ENCODE measurements at regions of chr1 and their contacts with region 1.

Region 1: DNA sequence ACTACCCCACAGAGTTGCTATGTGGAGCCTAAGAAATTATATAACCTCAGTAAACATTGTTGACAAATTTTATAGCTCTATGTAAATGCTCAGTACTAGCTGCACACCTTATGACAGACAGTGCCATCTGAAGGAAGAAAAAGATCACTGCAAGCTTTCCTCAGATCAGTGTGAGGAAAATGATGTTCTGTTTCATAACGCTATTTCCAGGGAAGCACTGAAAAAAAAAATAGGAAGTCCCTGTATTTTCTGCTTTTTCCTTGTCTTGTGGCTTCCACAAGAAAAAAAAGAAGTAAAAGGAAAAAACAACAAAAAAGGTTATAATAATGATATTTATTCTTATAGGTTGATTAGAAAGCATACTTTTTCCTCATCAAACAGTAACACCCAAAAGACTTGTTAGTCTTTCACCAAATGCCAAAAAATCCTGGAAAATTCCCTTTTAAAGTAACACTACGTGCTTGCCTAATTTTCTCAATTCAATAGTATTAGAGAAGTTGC is 23.2 kb downstream of the LYST start:
- DNase-seq: peak; percentile 76
- H3K4me3 Mint-ChIP-seq: no peak overlapping the region
- H3K27ac Mint-ChIP-seq: no peak overlapping the region
- H3K4me1 Mint-ChIP-seq: no peaks in the 10 kb centered on the region
- H3K27me3 Mint-ChIP-seq: no peaks in the 10 kb centered on the region
- CTCF ChIP-seq: peak; percentile 76

Region 2: DNA sequence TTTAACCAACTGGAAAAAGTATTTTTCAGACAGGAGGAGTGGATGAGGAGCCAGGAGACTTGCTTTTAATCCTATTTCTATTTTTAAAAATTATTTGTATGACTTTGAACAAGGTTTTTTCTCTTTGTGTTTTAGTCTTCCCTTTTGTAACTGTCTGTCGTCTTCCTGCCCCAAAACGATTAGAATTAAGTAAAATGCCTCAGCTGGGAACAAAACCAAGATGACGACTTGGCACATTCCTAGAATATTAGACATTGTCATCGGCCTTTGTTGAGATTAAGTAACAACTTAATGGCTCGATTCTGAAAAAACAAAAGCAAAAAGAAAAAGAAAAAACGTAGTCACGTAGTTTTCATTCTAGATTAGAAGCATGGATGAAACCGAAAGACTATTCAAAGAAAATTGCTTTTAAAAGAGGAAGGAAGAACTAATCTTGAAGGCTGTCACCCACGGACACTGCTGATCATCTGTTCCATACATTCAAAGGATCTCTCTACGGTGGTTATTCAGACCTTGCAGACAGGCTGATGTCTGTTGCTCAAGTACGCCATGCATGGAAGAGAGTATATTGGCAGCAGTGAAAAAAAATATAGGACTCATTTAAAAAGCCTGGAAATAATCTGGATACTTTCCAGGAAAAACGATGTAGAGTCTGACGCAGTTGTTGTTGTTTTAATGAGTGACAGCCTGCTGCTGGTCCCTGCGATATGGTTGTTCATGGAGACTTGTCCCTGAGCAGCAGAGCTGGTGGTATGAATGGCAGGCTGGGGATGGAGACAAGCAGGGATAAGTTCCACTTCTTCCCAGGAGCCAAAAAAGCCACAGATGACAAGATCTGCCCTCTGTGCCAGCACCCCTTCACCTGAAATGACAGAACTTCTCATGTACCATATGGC is 210.8 kb before region 1 on chr1:
- CTCF ChIA-PET with region 1: no interaction called
- POLR2A ChIA-PET with region 1: no interaction called
- intact Hi-C with region 1: no loop called
- DNase-seq: peak; percentile 71
- H3K4me3 Mint-ChIP-seq: peak overlapping the region; percentile 69
- H3K27ac Mint-ChIP-seq: peak overlapping the region; percentile 72
- H3K4me1 Mint-ChIP-seq: peaks cover 13% of the 10 kb centered on the region
- H3K27me3 Mint-ChIP-seq: no peaks in the 10 kb centered on the region
- CTCF ChIP-seq: no peak

Region 3: GRCh38 chr1:235791532-235792060 is 51.9 kb before region 1 on chr1:
- CTCF ChIA-PET with region 1: interaction called, 14 read pairs
- POLR2A ChIA-PET with region 1: interaction called, 6 read pairs
- intact Hi-C with region 1: no loop called
- DNase-seq: no peak
- H3K4me3 Mint-ChIP-seq: no peak overlapping the region
- H3K27ac Mint-ChIP-seq: no peak overlapping the region
- H3K4me1 Mint-ChIP-seq: peaks cover 6% of the 10 kb centered on the region
- H3K27me3 Mint-ChIP-seq: no peaks in the 10 kb centered on the region
- CTCF ChIP-seq: no peak

Region 4: DNA sequence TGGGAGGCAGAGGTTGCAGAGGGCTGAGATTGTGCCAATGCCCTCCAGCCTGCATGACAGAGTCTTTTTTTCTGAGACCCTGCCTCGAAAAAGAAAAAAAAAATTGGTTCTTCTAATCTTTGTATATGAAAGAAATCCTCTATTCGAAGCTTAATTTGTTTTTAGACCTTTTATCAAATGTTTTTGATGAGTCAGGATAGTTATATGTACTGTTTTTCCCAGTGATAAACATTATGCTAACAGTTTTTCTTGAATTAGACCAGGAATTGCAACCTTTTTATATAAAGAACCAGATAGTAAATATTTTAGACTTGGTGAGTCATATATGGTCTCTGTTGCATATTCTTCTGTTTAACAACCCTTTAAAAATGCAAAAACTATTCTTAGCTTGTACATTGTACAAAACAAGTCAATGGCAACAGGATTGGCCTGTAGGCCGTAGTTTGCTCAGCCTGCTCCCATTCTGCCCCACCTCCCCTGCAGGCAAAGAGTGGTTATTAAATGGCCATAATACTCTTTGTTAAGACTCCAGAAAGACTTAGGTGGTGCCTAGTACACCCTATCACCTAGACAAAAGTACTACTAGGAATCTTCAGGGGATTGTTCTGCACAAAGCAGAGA is 22.0 kb before region 1 on chr1:
- CTCF ChIA-PET with region 1: interaction called, 19 read pairs
- POLR2A ChIA-PET with region 1: interaction called, 11 read pairs
- intact Hi-C with region 1: no loop called
- DNase-seq: no peak
- H3K4me3 Mint-ChIP-seq: no peak overlapping the region
- H3K27ac Mint-ChIP-seq: no peak overlapping the region
- H3K4me1 Mint-ChIP-seq: peaks cover 10% of the 10 kb centered on the region
- H3K27me3 Mint-ChIP-seq: no peaks in the 10 kb centered on the region
- CTCF ChIP-seq: no peak

Region 5: DNA sequence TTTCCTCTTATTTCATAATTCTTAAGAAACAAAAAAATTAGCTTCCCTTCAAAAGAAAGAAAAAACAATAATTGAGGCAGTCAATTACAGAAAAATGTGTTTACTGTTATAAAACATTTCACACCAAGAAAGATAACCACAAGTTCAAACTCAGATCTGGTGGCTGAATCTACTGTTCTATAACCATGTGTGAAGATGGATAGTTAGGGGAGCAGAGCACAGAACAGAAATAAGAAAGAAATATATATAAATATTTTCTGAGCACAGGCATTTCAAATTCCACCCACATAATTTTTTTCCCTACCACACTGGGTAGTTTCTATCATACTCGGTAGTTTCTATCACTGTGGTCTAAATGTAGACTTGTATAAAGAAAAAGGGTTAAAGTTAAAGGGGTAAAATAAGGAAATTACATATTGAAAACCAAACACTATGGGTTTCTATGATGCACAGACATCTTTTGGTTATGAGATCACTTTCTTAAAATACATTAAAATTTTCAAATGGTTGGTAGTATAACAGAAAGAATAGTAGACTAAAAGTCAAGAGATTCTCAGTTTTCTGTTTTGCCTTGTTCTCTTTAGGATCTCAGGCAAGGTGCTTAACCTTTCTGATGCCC is 12.4 kb after region 1 on chr1:
- CTCF ChIA-PET with region 1: interaction called, 29 read pairs
- POLR2A ChIA-PET with region 1: interaction called, 5 read pairs
- intact Hi-C with region 1: no loop called
- DNase-seq: no peak
- H3K4me3 Mint-ChIP-seq: no peak overlapping the region
- H3K27ac Mint-ChIP-seq: no peak overlapping the region
- H3K4me1 Mint-ChIP-seq: peaks cover 20% of the 10 kb centered on the region
- H3K27me3 Mint-ChIP-seq: no peaks in the 10 kb centered on the region
- CTCF ChIP-seq: no peak